GM12878 (cell line): ENCODE measurements at regions of chr2 and their contacts with region 1.

Region 1: DNA sequence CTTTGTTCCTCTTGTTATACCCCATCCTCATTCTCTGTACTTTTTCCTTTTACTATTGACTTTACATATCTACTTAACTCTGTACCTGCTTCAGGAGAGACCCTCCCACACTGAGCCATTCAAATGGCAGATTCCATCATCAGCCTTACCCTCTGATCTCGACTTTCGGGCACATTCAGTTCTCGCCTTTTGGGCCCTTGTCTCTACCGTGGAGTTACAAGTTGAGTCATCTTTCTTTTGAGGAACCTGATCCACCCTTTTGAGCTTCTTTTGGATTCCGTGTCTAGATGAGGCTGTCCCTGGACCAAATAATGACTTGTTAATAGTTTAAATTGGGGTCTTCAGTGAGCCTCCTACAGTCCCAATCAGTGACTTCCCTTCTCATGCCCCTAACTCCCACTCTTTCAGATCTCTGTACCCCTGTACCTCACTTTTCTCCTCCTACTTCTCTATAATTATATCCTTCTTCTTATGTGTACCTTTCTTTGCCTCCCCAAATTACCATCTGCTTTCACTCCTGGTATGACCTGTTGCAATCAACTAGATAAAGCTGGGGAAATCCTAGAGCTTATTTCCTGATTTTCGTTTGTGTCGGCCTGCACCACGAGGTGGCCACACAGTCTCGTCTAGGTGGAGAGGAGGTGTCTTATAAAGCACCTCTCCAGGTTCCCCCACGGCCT is 17.2 kb downstream of the SP110 start:
- DNase-seq: peak; percentile 60
- ATAC-seq: peak; percentile 77
- H3K4me3 ChIP-seq: 0 out of 2 replicates have a peak overlapping the region, but pooled peaks have one; percentile 2
- H3K27ac ChIP-seq: peak overlapping the region; percentile 39
- H3K4me1 ChIP-seq: peaks cover 48% of the 10 kb centered on the region
- H3K27me3 ChIP-seq: no peaks in the 10 kb centered on the region
- CTCF ChIP-seq: peak; percentile 40 to 77 (median 44); a peak in 4 of 6 replicates
- EP300 ChIP-seq: no peak
- POLR2A ChIP-seq: no peak
- RAD21 ChIP-seq: peak; percentile 76

Region 2: DNA sequence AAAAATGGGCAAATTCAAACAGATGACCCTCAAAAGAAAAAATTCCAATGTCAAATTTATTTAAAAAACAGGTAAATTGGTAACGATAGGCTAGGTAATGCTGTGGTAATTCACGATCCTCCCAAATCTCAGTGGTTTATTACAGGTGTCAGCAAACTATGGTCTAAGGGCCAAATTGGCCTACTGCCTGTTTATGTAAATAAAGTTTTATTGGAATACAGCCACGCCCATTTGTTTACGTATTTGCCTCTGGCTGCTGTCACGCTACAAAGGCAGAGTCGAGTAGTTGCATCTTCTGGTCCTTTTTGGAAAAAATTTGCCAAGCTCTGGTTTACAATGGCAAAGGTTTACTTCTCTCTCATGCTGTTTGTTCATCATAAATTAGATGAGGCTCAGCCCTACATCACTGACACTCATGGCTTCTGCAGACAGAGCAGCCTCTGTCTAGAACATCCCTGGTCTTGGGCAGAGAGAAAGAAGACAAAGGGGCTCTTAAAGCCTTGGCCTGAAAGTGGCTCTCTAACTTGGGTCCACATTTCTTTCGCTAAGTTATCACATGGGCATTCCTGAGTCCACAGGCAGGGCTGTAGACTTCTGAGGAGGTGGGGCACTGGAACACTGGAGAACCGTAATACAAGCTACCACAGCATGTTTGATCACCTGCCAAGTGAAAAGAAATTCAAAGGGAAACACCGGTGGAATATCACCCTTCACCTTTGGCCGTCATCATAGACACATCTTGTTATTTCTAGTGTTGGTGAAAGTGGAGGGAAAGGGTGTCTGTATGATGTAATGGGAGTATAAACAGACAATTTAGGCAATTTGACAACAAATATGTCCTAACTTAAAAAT is 17.6 kb before region 1 on chr2:
- CTCF ChIA-PET with region 1: no interaction called
- POLR2A ChIA-PET with region 1: no interaction called
- RAD21 ChIA-PET with region 1: interaction called, 3 read pairs
- SMC1A ChIA-PET with region 1: interaction called, 10 read pairs
- in situ Hi-C with region 1: no loop called
- intact Hi-C with region 1: no loop called
- DNase-seq: no peak
- ATAC-seq: no peak
- H3K4me3 ChIP-seq: no peak overlapping the region
- H3K27ac ChIP-seq: no peak overlapping the region
- H3K4me1 ChIP-seq: no peaks in the 10 kb centered on the region
- H3K27me3 ChIP-seq: no peaks in the 10 kb centered on the region
- CTCF ChIP-seq: no peak
- EP300 ChIP-seq: no peak
- POLR2A ChIP-seq: no peak
- RAD21 ChIP-seq: no peak

Region 3: DNA sequence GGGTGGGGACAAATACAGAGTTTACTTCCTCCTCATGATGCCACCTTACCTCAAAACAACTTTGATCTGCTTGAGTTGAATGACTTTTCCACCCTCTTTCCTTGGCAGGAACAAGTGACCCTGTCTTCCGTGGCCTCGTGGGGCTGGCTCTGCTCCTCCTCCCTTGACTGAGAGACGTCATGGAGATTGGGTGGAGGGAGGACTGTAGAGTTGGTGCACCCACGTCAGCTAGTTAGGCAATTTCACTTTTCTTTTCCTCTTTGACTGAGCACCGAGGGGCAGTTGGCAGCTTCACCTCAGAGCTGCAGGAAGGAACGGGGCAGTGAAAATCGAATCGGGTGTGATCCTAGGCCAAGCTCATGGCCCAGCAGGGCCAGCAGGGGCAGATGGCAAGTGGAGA is 22.9 kb after region 1 on chr2 and contains the start of gene SP140:
- CTCF ChIA-PET with region 1: interaction called, 7 read pairs
- POLR2A ChIA-PET with region 1: interaction called, 11 read pairs
- RAD21 ChIA-PET with region 1: interaction called, 37 read pairs
- SMC1A ChIA-PET with region 1: interaction called, 121 read pairs
- in situ Hi-C with region 1: no loop called
- intact Hi-C with region 1: no loop called
- DNase-seq: peak; percentile 80
- ATAC-seq: peak; percentile 77
- H3K4me3 ChIP-seq: peak within 1 kb of the TSS; percentile 72
- H3K27ac ChIP-seq: peak within 1 kb of the TSS; percentile 68
- H3K4me1 ChIP-seq: peaks cover 48% of the 10 kb centered on the region
- H3K27me3 ChIP-seq: no peaks in the 10 kb centered on the region
- CTCF ChIP-seq: 0 out of 6 replicates have a peak, but pooled peaks of 1 of the 3 experiments have one; percentile 4
- EP300 ChIP-seq: no peak
- POLR2A ChIP-seq: peak; percentile 93
- RAD21 ChIP-seq: no peak
- polyA plus RNA-seq, gene SP140: 61.7 to 93.9 TPM

Region 4: DNA sequence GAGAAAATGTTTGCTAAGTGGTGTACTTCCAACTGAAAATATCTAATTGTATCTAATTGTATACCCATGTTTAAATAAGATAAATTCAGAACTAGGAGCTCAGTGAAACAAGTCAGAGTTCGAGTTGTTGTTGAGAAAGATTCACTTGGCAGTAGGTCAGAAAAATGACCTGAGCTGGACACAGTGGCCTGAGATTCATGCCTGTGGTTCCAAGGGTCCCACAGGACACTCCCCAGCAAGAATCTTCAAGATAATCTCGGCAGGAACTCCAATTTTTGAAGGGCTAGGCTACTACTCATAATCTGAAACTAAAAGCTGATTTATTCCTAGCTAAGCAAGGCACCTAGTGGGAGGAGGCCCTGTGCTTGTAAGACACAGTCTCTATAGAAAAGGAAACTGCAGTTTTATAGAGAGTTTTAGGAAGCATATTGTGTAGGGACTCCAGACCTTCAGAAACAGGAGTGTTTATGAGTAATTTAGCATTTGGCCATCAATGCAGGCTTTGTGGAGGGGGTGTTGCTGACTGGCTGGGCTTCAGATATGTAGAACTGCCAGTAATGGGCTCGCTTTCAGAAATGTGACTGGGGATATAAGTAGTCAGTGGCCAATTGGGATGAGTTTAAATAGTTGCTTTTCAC is 66.2 kb after region 1 on chr2:
- CTCF ChIA-PET with region 1: interaction called, 7 read pairs
- POLR2A ChIA-PET with region 1: interaction called, 3 read pairs
- RAD21 ChIA-PET with region 1: interaction called, 19 read pairs
- SMC1A ChIA-PET with region 1: interaction called, 15 read pairs
- in situ Hi-C with region 1: no loop called
- intact Hi-C with region 1: loop called (anchors 2 kb)
- DNase-seq: peak; percentile 36
- ATAC-seq: peak; percentile 59
- H3K4me3 ChIP-seq: no peak overlapping the region
- H3K27ac ChIP-seq: peak overlapping the region; percentile 76
- H3K4me1 ChIP-seq: peaks cover 28% of the 10 kb centered on the region
- H3K27me3 ChIP-seq: no peaks in the 10 kb centered on the region
- CTCF ChIP-seq: no peak
- EP300 ChIP-seq: no peak
- POLR2A ChIP-seq: no peak
- RAD21 ChIP-seq: no peak

Region 5: DNA sequence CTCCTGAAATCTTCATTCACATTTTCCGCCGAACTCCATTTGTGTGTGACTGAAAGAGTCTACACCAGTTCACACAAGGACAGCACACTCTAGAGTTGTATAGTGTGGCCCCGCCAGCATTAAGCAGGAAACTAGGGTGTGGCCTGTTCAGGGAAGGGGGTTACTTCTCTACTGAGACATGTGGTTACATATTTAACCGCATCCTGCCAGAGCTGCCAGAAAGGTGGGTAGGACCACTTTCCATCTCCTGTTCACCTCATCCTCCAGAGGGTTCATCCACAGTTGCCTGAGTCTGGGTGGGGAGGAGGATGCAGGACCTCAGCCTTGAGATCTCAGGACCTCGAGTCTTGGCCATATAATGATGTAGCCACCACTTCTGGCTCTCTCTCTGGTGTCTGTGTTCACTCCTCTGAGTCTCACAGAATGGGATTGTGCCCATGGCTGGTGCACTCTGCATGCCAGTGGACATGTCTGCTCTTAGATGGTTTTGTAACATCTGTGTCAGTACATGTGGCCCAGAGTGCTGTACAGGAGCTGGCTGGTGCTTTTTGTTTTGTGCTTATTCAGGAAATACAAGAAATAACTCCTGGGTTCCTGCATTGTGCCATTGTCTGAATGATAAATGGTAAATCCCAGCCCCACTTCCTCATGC is 116.8 kb after region 1 on chr2:
- CTCF ChIA-PET with region 1: interaction called, 6 read pairs
- POLR2A ChIA-PET with region 1: interaction called, 4 read pairs
- RAD21 ChIA-PET with region 1: interaction called, 13 read pairs
- SMC1A ChIA-PET with region 1: interaction called, 10 read pairs
- in situ Hi-C with region 1: no loop called
- intact Hi-C with region 1: loop called (anchors 5 kb)
- DNase-seq: peak; percentile 60
- ATAC-seq: peak; percentile 92
- H3K4me3 ChIP-seq: no peak overlapping the region
- H3K27ac ChIP-seq: peak overlapping the region; percentile 62
- H3K4me1 ChIP-seq: peaks cover 27% of the 10 kb centered on the region
- H3K27me3 ChIP-seq: no peaks in the 10 kb centered on the region
- CTCF ChIP-seq: no peak
- EP300 ChIP-seq: no peak
- POLR2A ChIP-seq: no peak
- RAD21 ChIP-seq: no peak

Region 6: GRCh38 chr2:230411570-230412370 is 209.2 kb after region 1 on chr2:
- CTCF ChIA-PET with region 1: interaction called, 13 read pairs
- POLR2A ChIA-PET with region 1: interaction called, 4 read pairs
- RAD21 ChIA-PET with region 1: interaction called, 15 read pairs
- SMC1A ChIA-PET with region 1: interaction called, 17 read pairs
- in situ Hi-C with region 1: no loop called
- intact Hi-C with region 1: loop called (anchors 2 kb)
- DNase-seq: no peak
- ATAC-seq: peak; percentile 77
- H3K4me3 ChIP-seq: peak overlapping the region; percentile 77
- H3K27ac ChIP-seq: peak overlapping the region; percentile 79
- H3K4me1 ChIP-seq: peaks cover 35% of the 10 kb centered on the region
- H3K27me3 ChIP-seq: no peaks in the 10 kb centered on the region
- CTCF ChIP-seq: no peak
- EP300 ChIP-seq: no peak
- POLR2A ChIP-seq: peak; percentile 84
- RAD21 ChIP-seq: no peak

Region 7: GRCh38 chr2:230472621-230473018 is 270.1 kb after region 1 on chr2:
- CTCF ChIA-PET with region 1: interaction called, 5 read pairs
- POLR2A ChIA-PET with region 1: no interaction called
- RAD21 ChIA-PET with region 1: interaction called, 11 read pairs
- SMC1A ChIA-PET with region 1: interaction called, 15 read pairs
- in situ Hi-C with region 1: no loop called
- intact Hi-C with region 1: no loop called
- DNase-seq: peak; percentile 34
- ATAC-seq: peak; percentile 71
- H3K4me3 ChIP-seq: no peak overlapping the region
- H3K27ac ChIP-seq: peak overlapping the region; percentile 21
- H3K4me1 ChIP-seq: peaks cover 32% of the 10 kb centered on the region
- H3K27me3 ChIP-seq: no peaks in the 10 kb centered on the region
- CTCF ChIP-seq: no peak
- EP300 ChIP-seq: no peak
- POLR2A ChIP-seq: no peak
- RAD21 ChIP-seq: no peak